PC-3 (cell line): ENCODE measurements at regions of chr5 and their contacts with region 1.

Region 1: GRCh38 chr5:6765612-6766525 is 52.6 kb downstream of the TENT4A start:
- DNase-seq: peak; percentile 97
- ATAC-seq: peak; percentile 66
- H3K4me3 ChIP-seq: peak overlapping the region; percentile 49
- H3K27ac ChIP-seq: peak overlapping the region; percentile 86
- H3K4me1 ChIP-seq: peaks cover 23% of the 10 kb centered on the region
- H3K27me3 ChIP-seq: no peaks in the 10 kb centered on the region
- CTCF ChIP-seq: peak; percentile 99

Region 2: DNA sequence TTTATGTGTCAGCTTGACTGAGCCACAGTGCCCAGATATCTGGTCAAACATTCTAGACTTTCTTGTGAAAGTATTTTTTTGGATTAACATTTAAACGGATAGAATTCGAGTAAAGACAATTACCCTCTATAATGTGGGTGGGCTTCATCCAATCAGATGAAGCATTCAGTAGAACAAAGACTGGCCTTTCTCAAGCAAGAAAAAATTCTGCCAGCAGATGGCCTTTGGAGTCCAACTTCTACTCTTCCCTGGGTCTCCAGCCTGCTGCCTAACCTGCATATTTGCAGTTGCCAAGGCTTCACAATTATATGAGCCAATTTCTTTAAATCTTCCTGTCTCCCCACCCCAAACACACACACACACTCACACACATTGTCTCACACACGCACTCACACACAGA is 473.9 kb before region 1 on chr5:
- CTCF ChIA-PET with region 1: no interaction called
- POLR2A ChIA-PET with region 1: no interaction called
- intact Hi-C with region 1: no loop called
- DNase-seq: peak; percentile 64
- ATAC-seq: peak; percentile 49; the same call in 1 of the 2 replicates
- H3K4me3 ChIP-seq: no peak overlapping the region
- H3K27ac ChIP-seq: no peak overlapping the region
- H3K4me1 ChIP-seq: no peaks in the 10 kb centered on the region
- H3K27me3 ChIP-seq: no peaks in the 10 kb centered on the region
- CTCF ChIP-seq: peak; percentile 57

Region 3: DNA sequence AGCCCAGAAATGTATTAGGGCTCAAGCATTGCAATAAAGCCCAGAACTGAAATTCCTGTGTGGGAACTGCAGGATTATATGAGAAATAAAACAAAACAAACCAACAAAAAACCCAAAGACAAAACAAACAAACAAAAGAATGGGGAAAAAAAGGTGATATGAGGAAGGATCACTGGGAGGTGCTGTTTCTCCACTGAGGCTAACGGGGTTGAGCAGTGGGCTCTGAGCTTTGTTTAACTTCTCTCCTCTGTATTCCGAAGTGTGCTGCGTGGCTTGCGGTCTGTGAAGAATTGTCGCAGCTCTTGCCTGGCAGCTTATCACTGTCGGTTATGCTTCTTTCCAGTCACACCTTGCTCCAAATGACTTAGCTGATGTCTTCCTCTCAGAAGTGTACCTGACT is 53.7 kb after region 1 on chr5:
- CTCF ChIA-PET with region 1: interaction called, 3 read pairs
- POLR2A ChIA-PET with region 1: interaction called, 3 read pairs
- intact Hi-C with region 1: loop called (anchors 1 kb)
- DNase-seq: no peak
- ATAC-seq: no peak
- H3K4me3 ChIP-seq: no peak overlapping the region
- H3K27ac ChIP-seq: no peak overlapping the region
- H3K4me1 ChIP-seq: no peaks in the 10 kb centered on the region
- H3K27me3 ChIP-seq: peaks cover 84% of the 10 kb centered on the region
- CTCF ChIP-seq: no peak

Region 4: DNA sequence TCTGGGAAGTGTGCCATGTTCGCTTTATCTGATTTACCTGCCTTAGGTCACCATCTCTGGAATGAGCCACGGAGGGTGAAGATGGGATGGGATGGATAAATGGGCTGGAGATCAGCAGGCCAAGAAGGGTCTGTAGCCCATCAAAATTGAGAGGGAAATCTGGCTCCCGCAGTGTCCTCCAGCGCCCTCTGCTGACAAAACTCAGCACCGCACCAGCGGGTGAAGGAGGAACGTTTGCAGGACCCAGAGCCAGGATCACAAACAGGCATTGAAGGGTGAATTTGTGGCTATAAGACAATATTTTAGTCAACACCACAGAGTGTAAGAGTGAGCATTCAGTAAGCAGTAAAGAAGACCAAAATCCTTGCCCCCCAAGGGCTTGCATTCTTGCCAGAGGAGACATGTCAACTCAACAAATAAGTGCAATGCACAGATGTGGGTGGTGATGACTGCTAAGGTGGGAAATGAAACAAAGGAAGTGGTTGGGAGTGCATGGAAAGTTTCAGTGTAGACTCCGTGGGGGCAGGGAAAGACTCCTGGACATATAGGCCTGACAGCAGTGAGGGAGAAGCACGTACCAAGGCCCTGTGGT is 71.7 kb after region 1 on chr5:
- CTCF ChIA-PET with region 1: no interaction called
- POLR2A ChIA-PET with region 1: no interaction called
- intact Hi-C with region 1: loop called (anchors 5 kb)
- DNase-seq: peak; percentile 55
- ATAC-seq: no peak
- H3K4me3 ChIP-seq: no peak overlapping the region
- H3K27ac ChIP-seq: no peak overlapping the region
- H3K4me1 ChIP-seq: no peaks in the 10 kb centered on the region
- H3K27me3 ChIP-seq: peaks cover 35% of the 10 kb centered on the region
- CTCF ChIP-seq: peak; percentile 89

Region 5: DNA sequence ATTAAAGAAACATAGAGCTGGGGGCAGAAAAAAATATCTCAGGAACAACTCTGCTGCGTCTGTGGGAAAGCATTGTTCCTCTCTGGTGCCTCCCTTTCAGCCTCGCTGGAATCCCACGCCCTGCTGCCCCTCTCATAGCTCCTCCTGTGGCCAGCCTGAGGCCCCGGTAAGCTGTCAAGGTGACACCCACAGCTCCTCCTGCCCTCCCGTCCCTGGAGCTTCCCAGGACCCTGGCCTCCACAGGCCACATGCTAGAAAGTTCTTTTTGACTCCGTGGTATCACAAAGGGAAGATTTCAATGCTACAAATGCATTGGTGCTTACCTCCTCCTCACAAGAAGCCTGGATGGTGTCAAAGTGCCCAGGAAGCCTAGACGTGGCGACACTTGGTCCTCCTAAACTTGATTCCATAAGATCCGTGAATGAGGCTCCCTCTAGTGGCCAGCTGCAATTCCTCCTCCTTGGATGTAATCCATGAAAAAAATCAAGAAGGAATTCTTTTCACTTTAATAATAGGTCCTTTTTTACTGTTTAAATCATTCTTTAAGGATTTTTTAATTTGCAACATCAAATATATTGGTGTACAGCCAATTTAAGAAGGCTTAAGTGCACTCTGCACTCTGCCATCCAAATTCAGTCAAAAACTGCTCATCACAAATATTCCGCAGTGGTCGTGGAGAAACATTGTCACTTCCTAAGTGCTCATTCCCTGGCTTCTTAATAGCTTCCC is 980.2 kb after region 1 on chr5:
- CTCF ChIA-PET with region 1: no interaction called
- POLR2A ChIA-PET with region 1: no interaction called
- intact Hi-C with region 1: loop called (anchors 1 kb)
- DNase-seq: peak; percentile 84
- ATAC-seq: peak; percentile 57
- H3K4me3 ChIP-seq: no peak overlapping the region
- H3K27ac ChIP-seq: no peak overlapping the region
- H3K4me1 ChIP-seq: peaks cover 10% of the 10 kb centered on the region; the same call in 1 of the 2 replicates
- H3K27me3 ChIP-seq: peaks cover 42% of the 10 kb centered on the region
- CTCF ChIP-seq: peak; percentile 98

Region 6: GRCh38 chr5:7815892-7816534 is 1050.1 kb after region 1 on chr5:
- CTCF ChIA-PET with region 1: no interaction called
- POLR2A ChIA-PET with region 1: no interaction called
- intact Hi-C with region 1: loop called (anchors 2 kb)
- DNase-seq: peak; percentile 83
- ATAC-seq: peak; percentile 96
- H3K4me3 ChIP-seq: no peak overlapping the region
- H3K27ac ChIP-seq: no peak overlapping the region
- H3K4me1 ChIP-seq: no peaks in the 10 kb centered on the region
- H3K27me3 ChIP-seq: peaks cover 82% of the 10 kb centered on the region
- CTCF ChIP-seq: peak; percentile 99

Region 7: GRCh38 chr5:7868773-7869473 is 1103.1 kb after region 1 on chr5 and contains the starts of genes FASTKD3 and MTRR:
- CTCF ChIA-PET with region 1: no interaction called
- POLR2A ChIA-PET with region 1: no interaction called
- intact Hi-C with region 1: loop called (anchors 10 kb)
- DNase-seq: peak; percentile 97
- ATAC-seq: peak; percentile 100
- H3K4me3 ChIP-seq: peak within 1 kb of the TSS; percentile 88
- H3K27ac ChIP-seq: peak within 1 kb of the TSS; percentile 23
- H3K4me1 ChIP-seq: peaks cover 22% of the 10 kb centered on the region
- H3K27me3 ChIP-seq: no peaks in the 10 kb centered on the region
- CTCF ChIP-seq: no peak
- total RNA-seq, gene FASTKD3: 9.2 and 16.5 TPM in 2 replicates
- total RNA-seq, gene MTRR: 64.9 and 68.3 TPM in 2 replicates